ENCODE measurements at regions of chr2 and their contacts with region 1.

Region 1: DNA sequence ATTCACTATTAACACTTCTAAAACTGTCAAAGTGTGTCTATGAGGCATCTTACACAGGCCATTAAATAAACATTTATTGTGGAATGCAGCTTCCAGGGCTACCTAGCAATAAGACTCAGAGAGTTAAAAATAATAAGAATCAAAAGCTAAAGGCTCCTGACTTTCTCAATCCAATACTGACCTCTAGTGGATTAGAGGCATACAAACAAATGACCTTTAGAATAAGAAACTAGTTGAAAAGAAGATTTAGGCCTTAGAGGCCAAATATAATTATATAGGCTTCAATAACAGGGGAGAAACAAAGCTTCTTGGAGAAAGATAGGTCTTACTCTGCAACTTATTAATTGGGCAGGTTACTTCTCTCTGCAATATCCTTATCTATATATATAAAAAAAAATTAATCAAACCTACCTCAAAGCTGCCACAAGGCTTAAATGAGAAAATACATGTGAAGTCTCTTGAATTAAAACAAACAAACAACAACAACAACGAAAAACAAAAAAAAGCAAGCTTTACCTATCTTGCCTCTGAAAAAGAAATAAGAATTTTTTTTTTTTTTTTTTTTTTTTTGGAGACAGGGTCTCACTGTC is 246.1 kb downstream of the EXOC6B start:
- DNase-seq: no peak
- ATAC-seq: no peak
- H3K4me3 Mint-ChIP-seq: no peak overlapping the region
- H3K27ac Mint-ChIP-seq: no peak overlapping the region
- H3K4me1 Mint-ChIP-seq: no peaks in the 10 kb centered on the region
- H3K27me3 Mint-ChIP-seq: no peaks in the 10 kb centered on the region
- CTCF ChIP-seq: no peak

Region 2: GRCh38 chr2:71530641-71531332 is 1048.9 kb before region 1 on chr2:
- CTCF ChIA-PET with region 1: no interaction called
- POLR2A ChIA-PET with region 1: no interaction called
- intact Hi-C with region 1: loop called (anchors 5 kb)
- DNase-seq: no peak
- ATAC-seq: peak; percentile 28
- H3K4me3 Mint-ChIP-seq: no peak overlapping the region
- H3K27ac Mint-ChIP-seq: no peak overlapping the region
- H3K4me1 Mint-ChIP-seq: no peaks in the 10 kb centered on the region
- H3K27me3 Mint-ChIP-seq: peaks cover 23% of the 10 kb centered on the region
- CTCF ChIP-seq: no peak

Measured in activated B cell treated with CpG ODN at 0.5 μM for 24 hours (primary cell).